GM12878 (cell line): ENCODE measurements at regions of chr1 and their contacts with region 1.

Region 1: GRCh38 chr1:164823486-164824279 is 264.7 kb downstream of the PBX1 start:
- DNase-seq: no peak
- ATAC-seq: no peak
- H3K4me3 ChIP-seq: no peak overlapping the region
- H3K27ac ChIP-seq: no peak overlapping the region
- H3K4me1 ChIP-seq: no peaks in the 10 kb centered on the region
- H3K27me3 ChIP-seq: no peaks in the 10 kb centered on the region; a peak in 1 of 4 replicates
- CTCF ChIP-seq: no peak
- EP300 ChIP-seq: no peak
- POLR2A ChIP-seq: no peak
- RAD21 ChIP-seq: no peak

Region 2: DNA sequence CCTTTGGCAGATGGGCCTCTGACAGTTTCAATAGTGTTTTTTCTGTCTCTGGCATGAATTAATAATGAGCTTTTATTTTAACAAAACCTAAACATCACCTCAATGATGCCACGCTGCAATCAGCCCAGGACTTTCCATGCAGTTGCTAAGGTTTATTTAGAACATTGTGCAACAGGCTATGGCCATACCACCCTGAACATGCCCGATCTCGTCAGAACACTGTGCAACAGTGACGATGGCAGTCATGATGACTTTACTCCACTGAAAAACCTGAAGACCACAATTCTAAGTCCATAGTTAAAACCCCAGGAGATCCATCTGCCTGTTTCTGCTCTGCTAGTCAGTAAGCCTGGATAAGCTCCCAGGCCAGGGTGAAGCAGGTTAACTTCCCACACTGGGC is 45.3 kb after region 1 on chr1:
- CTCF ChIA-PET with region 1: no interaction called
- POLR2A ChIA-PET with region 1: no interaction called
- RAD21 ChIA-PET with region 1: no interaction called
- SMC1A ChIA-PET with region 1: no interaction called
- in situ Hi-C with region 1: no loop called
- intact Hi-C with region 1: loop called (anchors 5 kb)
- DNase-seq: no peak
- ATAC-seq: no peak
- H3K4me3 ChIP-seq: no peak overlapping the region
- H3K27ac ChIP-seq: no peak overlapping the region
- H3K4me1 ChIP-seq: no peaks in the 10 kb centered on the region
- H3K27me3 ChIP-seq: no peaks in the 10 kb centered on the region
- CTCF ChIP-seq: no peak
- EP300 ChIP-seq: no peak
- POLR2A ChIP-seq: no peak
- RAD21 ChIP-seq: no peak